ENCODE measurements at regions of chr1 and their contacts with region 1.

Region 1: DNA sequence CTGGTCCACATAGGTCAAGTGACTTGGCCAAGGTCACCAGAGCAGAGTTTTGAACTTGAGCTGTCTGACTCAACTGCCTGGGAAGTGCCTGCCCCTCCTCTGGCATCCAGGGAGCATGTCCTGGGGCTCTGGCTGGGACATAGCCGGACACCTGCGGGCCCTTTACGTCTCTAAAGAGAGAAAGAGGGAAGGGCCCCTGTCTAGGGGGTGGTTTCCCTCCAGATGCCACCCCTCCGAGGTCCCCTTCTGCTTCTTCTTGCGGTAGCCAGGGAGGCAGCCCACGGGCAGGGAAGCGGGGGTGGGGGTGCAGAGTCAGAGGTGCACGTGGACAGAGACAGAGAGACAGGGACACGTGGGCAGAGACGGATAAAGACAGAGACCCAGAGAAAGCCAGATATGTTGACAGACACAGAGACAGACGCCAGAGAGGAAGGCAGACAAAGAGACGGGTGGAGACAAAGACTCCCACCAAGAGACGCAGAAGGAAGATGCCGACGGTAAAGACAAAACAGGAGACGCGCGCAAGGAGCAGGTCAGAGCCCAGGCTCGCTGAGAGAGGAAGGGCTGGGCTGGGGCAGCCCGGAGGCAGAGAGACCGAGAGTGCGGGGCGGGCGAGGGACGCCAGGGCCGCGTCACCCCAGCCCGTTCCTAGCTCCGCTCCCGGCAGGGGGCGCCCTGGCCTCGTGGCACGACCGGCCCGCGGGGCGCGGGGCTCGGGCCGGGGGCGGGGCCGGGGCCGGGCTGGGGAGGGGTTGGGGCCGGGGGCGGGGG is 458 bp upstream of the ALPL start:
- DNase-seq: peak; percentile 60 to 79 (median 74)
- H3K4me3 ChIP-seq: no peak overlapping the region
- H3K27ac ChIP-seq: no peak overlapping the region
- H3K4me1 ChIP-seq: peaks cover 9% of the 10 kb centered on the region
- H3K27me3 ChIP-seq: no peaks in the 10 kb centered on the region
- CTCF ChIP-seq: peak in 1 of 3 donors; percentile 43
- EP300 ChIP-seq: no peak
- POLR2A ChIP-seq: no peak

Region 2: DNA sequence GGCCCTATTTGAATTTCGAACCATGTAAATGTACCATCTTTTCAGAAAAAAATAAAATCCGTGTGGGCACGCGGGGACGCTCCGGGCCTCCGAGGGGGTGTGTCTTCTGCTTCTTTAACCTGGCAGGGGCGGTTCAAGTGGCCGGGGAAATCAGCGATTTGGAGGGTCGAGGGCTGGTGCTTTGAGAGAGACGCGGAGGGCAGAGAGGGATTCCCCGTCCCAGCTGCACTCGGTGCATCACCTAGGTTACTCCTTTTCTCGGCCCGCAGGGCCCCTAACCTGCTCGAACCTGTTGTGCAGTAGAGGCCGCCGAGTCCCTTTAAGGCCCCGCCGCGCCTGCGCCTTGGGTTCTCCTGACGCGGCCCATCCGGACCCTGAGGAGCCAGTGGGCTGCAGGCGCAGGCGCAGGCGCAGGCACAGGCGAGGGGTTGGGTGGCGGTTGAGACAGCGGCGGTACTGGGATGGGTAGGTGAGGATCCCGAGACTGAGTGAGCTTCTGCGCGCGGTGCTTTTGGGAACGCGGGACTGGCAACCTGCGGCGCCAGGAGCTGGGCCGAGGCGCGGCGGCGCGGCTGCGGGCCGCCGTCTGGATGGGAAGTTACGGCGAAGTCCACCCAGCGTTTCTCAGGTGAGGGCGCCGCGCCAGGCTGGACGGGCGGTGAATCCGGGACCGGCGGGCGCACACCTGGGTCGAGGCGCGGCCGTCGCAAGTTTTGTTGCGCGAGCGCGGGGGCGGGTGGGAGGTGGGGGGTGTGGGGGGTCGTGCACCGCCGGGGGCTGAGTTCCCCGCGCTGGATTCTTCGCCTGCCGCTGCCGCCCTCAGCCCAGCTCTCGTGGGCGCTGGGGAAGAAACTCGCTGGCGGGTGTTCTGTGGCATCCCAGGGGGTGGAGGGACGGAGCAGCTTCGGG is 68.8 kb before region 1 on chr1 and contains the start of gene NBPF3:
- intact Hi-C with region 1: no loop called
- DNase-seq: peak; percentile 82 to 91 (median 87)
- H3K4me3 ChIP-seq: peak within 1 kb of the TSS; percentile 70
- H3K27ac ChIP-seq: peak within 1 kb of the TSS in 1 of 2 donors; percentile 67
- H3K4me1 ChIP-seq: no peaks in the 10 kb centered on the region
- H3K27me3 ChIP-seq: no peaks in the 10 kb centered on the region
- CTCF ChIP-seq: no peak
- EP300 ChIP-seq: no peak
- POLR2A ChIP-seq: peak; percentile 26
- total RNA-seq, gene NBPF3: 5.6 to 9.8 (median 8.8) TPM

Region 3: DNA sequence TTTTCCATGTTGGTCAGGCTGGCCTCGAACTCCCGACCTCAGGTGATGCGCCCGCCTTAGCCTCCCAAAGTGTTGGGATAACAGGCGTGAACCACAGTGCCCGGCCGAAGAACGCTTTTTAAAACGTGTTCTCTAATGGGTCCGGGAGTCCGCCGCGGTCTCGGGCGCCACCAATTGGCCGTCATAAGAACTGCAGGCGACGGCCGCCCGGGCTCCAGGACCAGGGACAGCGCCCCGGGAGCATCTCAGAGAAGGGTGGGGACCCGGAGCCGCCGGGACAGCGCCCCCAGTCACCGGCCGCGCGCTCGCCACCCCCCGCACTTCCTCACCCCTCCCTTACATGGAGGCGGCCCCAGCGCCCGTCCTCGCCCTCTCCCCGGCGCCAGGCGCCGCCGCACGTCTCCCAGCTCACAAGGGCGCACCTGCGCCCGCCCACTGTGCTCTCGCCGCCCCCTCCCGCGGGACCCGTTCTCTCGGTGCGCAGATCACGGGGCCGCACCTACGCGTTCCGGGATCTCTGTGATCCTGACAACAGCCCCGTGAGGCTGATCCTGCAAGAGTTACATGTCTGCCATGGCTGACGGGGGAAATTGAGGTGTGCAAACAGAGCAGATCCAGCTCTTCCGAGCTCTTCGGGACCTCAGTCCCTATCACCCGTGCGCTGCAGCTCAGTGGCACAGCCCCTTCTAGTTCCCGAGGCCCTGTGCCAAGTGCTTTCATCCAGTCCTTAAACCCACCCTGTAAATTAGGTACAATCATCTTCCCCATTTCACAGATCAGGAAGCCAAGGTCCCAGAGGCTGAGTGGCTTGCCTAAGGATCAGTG is 150.5 kb after region 1 on chr1:
- intact Hi-C with region 1: loop called in 2 of 4 experiments (anchors 10 kb)
- DNase-seq: peak; percentile 53 to 87 (median 69)
- H3K4me3 ChIP-seq: no peak overlapping the region
- H3K27ac ChIP-seq: no peak overlapping the region
- H3K4me1 ChIP-seq: no peaks in the 10 kb centered on the region
- H3K27me3 ChIP-seq: no peaks in the 10 kb centered on the region
- CTCF ChIP-seq: peak; percentile 71 to 89 (median 72)
- EP300 ChIP-seq: no peak
- POLR2A ChIP-seq: no peak